Endothelial cell of umbilical vein (primary cell): ENCODE measurements at regions of chr12 and their contacts with region 1.

Region 1: GRCh38 chr12:49783917-49784676 is 42.7 kb downstream of the TMBIM6 start:
- DNase-seq: peak; percentile 97
- H3K4me3 ChIP-seq: no peak overlapping the region
- H3K27ac ChIP-seq: peak overlapping the region; percentile 92
- H3K4me1 ChIP-seq: peaks cover 29% of the 10 kb centered on the region
- H3K27me3 ChIP-seq: peaks cover 0 to 2% of the 10 kb centered on the region in 2 experiments
- CTCF ChIP-seq: no peak
- POLR2A ChIP-seq: peak; percentile 89

Region 2: GRCh38 chr12:49821373-49822287 is 37.5 kb after region 1 on chr12:
- CTCF ChIA-PET with region 1: interaction called, 5 read pairs
- POLR2A ChIA-PET with region 1: no interaction called
- dilution Hi-C with region 1: no loop called
- intact Hi-C with region 1: loop called (anchors 1 kb)
- DNase-seq: no peak
- H3K4me3 ChIP-seq: no peak overlapping the region
- H3K27ac ChIP-seq: peak overlapping the region; percentile 54
- H3K4me1 ChIP-seq: peaks cover 42% of the 10 kb centered on the region
- H3K27me3 ChIP-seq: no peaks in the 10 kb centered on the region
- CTCF ChIP-seq: no peak
- POLR2A ChIP-seq: no peak

Region 3: DNA sequence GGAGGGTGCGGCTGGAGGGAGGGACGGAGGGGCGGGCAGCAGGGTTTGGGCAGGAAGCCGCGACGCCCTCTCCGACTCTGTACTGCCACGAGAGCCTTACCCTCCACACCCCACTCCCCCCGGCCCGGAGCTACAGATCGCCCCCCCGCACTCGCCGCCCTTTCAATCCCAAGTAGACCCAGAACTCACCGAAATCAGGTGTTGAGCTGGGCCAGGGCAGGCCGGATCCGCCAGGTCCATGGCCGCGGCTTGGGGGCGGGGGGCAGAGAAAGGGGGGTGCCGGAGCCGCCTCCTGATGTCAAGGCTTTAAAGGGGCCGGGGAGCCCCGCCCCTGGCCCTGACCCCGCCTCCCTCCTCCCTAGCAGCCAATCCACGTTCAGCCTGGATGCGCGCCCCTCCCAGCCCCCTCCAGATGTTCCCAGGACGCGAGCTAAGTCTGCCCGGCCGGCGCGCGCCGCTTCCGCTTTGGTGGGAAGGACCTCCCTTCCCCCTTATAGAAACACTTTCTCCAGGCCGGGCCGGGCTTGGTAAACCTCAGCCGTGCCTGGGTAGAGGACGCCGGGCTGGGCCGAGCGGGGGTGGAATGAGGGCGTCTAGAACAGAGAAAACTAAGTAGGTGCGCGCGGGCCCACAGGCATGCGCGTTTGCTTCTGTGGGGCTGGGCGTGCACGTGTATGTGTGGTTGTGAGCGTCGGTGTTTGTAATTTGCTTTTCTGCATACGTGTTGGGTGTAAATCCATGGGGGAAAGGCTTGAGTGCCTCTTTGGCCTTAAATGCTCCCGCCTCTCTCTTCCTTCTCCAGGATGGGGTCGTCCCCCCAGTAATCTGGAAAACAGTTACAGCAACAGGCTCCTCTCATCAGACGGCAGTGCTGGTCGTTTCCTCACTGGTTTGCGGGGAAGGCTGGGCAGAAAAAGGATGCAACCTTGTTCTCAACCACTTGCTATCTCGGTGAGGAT is 44.3 kb after region 1 on chr12 and contains the start of gene NCKAP5L:
- CTCF ChIA-PET with region 1: interaction called, 5 read pairs
- POLR2A ChIA-PET with region 1: interaction called, 6 read pairs
- dilution Hi-C with region 1: no loop called
- intact Hi-C with region 1: loop called (anchors 1 kb)
- DNase-seq: peak; percentile 97
- H3K4me3 ChIP-seq: peak within 1 kb of the TSS; percentile 58 to 76 (median 72)
- H3K27ac ChIP-seq: peak within 1 kb of the TSS; percentile 52
- H3K4me1 ChIP-seq: peaks cover 35% of the 10 kb centered on the region
- H3K27me3 ChIP-seq: no peaks in the 10 kb centered on the region
- CTCF ChIP-seq: no peak
- POLR2A ChIP-seq: peak; percentile 75
- total RNA-seq, gene NCKAP5L: 46.1 and 52.1 TPM in 2 replicates